ENCODE measurements at regions of chr10 and their contacts with region 1.

Region 1: GRCh38 chr10:61733358-61733940 is 70.7 kb downstream of the CABCOCO1 start:
- DNase-seq: no peak
- H3K4me3 ChIP-seq: no peak overlapping the region
- H3K27ac ChIP-seq: no peak overlapping the region
- H3K4me1 ChIP-seq: peaks cover 0 to 3% (median 0%) of the 10 kb centered on the region in 4 donors
- H3K27me3 ChIP-seq: no peaks in the 10 kb centered on the region
- CTCF ChIP-seq: peak; percentile 43 to 54 (median 47)
- EP300 ChIP-seq: no peak
- POLR2A ChIP-seq: no peak

Region 2: GRCh38 chr10:61097026-61097425 is 636.4 kb before region 1 on chr10:
- in situ Hi-C with region 1: no loop called
- intact Hi-C with region 1: no loop called
- DNase-seq: no peak
- H3K4me3 ChIP-seq: no peak overlapping the region
- H3K27ac ChIP-seq: no peak overlapping the region
- H3K4me1 ChIP-seq: no peaks in the 10 kb centered on the region
- H3K27me3 ChIP-seq: no peaks in the 10 kb centered on the region
- CTCF ChIP-seq: no peak
- EP300 ChIP-seq: no peak
- POLR2A ChIP-seq: no peak

Region 3: GRCh38 chr10:61140765-61141392 is 592.6 kb before region 1 on chr10:
- in situ Hi-C with region 1: loop called in 2 of 4 experiments (anchors 25 kb)
- intact Hi-C with region 1: no loop called
- DNase-seq: no peak
- H3K4me3 ChIP-seq: no peak overlapping the region
- H3K27ac ChIP-seq: no peak overlapping the region
- H3K4me1 ChIP-seq: peaks cover 0 to 3% (median 0%) of the 10 kb centered on the region in 4 donors
- H3K27me3 ChIP-seq: no peaks in the 10 kb centered on the region
- CTCF ChIP-seq: peak; percentile 53 to 58 (median 57)
- EP300 ChIP-seq: no peak
- POLR2A ChIP-seq: no peak

Region 4: DNA sequence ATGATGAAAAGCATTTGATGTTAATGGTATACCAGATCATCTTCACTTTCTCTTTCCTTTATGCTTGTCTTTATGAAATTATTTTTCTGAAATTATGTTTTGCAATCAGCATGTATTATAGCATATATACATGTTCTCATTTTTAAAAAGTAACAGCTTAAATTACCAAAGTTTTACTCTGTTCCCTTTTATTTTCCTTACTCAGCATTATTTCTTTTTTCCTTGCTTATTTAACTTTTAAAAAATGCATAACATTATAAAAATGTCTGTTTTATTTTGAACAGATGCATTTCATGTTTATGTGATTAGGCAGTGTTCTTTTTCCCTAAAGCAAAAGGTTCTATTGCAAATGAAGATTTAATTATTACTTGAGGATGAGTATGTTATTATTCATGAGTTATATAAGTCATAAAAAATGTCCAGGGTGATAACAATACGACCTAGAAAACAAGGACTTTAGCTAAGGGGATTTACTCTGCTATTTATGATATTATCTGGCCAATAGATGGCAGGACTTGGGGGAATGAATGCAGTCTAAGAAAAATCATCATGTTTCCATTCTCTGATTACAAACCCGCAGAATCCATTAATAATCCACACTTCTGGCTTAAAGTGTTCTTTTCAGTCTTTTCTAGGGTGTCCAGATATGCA is 32.3 kb before region 1 on chr10:
- in situ Hi-C with region 1: no loop called
- intact Hi-C with region 1: no loop called
- DNase-seq: no peak
- H3K4me3 ChIP-seq: no peak overlapping the region
- H3K27ac ChIP-seq: no peak overlapping the region
- H3K4me1 ChIP-seq: peaks cover 0 to 11% (median 0%) of the 10 kb centered on the region in 4 donors
- H3K27me3 ChIP-seq: no peaks in the 10 kb centered on the region
- CTCF ChIP-seq: no peak
- EP300 ChIP-seq: no peak
- POLR2A ChIP-seq: no peak

Region 5: GRCh38 chr10:62025901-62026879 is 292.7 kb after region 1 on chr10:
- in situ Hi-C with region 1: no loop called
- intact Hi-C with region 1: no loop called
- DNase-seq: no peak
- H3K4me3 ChIP-seq: no peak overlapping the region
- H3K27ac ChIP-seq: no peak overlapping the region
- H3K4me1 ChIP-seq: peaks cover 9 to 33% (median 15%) of the 10 kb centered on the region in 4 donors
- H3K27me3 ChIP-seq: no peaks in the 10 kb centered on the region
- CTCF ChIP-seq: no peak
- EP300 ChIP-seq: no peak
- POLR2A ChIP-seq: no peak